Prostate gland (tissue), 2 donors: ENCODE measurements at regions of chr10 and their contacts with region 1.

Region 1: DNA sequence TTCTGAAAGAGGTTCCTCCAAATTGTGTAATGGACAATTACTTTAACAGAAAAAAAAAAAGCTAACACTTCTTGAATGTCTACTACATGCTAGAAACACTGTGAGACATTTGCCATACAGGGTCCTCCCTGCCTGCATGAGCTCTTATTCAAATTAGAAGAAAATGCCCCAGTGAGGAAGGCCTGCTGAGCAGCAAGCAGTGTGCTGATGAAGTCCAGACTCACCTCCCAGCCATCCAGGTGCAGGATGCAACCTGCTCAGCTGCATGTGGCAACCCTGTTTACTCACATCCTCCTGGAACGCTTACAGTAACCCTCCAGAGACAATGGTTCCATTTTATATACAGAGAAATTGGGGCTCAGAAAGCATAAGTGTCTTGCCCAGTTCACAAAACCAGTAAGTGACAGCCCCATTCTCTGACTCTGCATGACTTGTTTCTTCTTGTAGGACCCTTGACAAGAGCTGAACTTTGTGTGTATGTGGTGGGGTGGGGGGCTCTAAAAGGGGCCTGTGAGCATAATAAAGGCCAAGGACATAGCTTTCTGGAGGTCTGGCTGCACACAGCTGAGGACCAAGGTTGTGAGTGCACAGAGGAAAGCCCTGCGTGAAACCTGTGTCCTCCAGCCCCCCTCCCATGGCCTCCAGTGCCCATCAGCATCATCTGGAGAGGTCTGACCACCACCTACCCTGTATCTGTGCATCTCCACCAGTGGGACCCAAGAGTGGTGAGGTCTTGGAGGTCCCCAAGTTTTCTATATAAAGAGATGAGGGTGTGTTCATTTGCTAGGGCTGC is 387.8 kb downstream of the GRID1 start:
- DNase-seq: no peak
- H3K4me3 ChIP-seq: no peak overlapping the region
- H3K27ac ChIP-seq: no peak overlapping the region
- H3K4me1 ChIP-seq: no peaks in the 10 kb centered on the region
- H3K27me3 ChIP-seq: no peaks in the 10 kb centered on the region
- CTCF ChIP-seq: no peak
- POLR2A ChIP-seq: no peak

Region 2: GRCh38 chr10:86046845-86047460 is 68.2 kb after region 1 on chr10:
- intact Hi-C with region 1: no loop called
- DNase-seq: no peak
- H3K4me3 ChIP-seq: no peak overlapping the region
- H3K27ac ChIP-seq: no peak overlapping the region
- H3K4me1 ChIP-seq: no peaks in the 10 kb centered on the region
- H3K27me3 ChIP-seq: no peaks in the 10 kb centered on the region
- CTCF ChIP-seq: no peak
- POLR2A ChIP-seq: no peak

Region 3: DNA sequence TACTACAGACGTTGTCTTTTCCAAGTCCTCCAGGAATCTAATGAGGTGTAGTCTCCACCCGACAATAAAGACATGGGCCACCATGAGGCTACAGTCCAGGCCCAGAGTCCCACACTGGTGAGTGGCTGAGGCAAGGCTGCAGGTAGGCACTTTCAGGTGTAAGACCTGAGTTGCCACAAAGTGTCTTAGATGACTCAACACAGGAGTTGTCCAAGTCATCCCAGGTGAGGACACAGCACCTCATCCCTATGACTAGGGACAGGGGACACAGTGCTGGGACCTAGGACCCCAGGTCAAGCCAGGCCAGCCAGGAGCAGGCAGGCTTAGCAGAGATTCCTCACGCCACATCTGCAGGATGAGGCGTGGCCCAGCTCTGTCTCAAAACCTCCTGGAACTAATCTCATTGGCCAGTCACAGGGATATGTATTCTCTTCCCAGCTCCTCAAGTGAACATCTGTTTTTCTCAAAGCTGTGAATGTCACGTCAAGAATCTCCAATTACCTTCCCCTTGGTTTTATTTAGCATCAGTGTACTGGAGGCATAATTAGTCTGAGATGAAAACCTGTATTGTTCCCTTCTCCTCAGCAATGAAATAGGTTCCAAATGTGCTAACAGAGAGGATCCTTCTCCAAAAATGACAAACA is 133.3 kb after region 1 on chr10:
- intact Hi-C with region 1: no loop called
- DNase-seq: no peak
- H3K4me3 ChIP-seq: no peak overlapping the region
- H3K27ac ChIP-seq: no peak overlapping the region
- H3K4me1 ChIP-seq: no peaks in the 10 kb centered on the region
- H3K27me3 ChIP-seq: no peaks in the 10 kb centered on the region
- CTCF ChIP-seq: no peak
- POLR2A ChIP-seq: no peak

Region 4: GRCh38 chr10:86139066-86139657 is 160.4 kb after region 1 on chr10:
- intact Hi-C with region 1: loop called (anchors 10 kb)
- DNase-seq: no peak
- H3K4me3 ChIP-seq: no peak overlapping the region
- H3K27ac ChIP-seq: no peak overlapping the region
- H3K4me1 ChIP-seq: no peaks in the 10 kb centered on the region
- H3K27me3 ChIP-seq: no peaks in the 10 kb centered on the region
- CTCF ChIP-seq: no peak
- POLR2A ChIP-seq: no peak